ENCODE measurements at regions of chr6 and their contacts with region 1.

Region 1: DNA sequence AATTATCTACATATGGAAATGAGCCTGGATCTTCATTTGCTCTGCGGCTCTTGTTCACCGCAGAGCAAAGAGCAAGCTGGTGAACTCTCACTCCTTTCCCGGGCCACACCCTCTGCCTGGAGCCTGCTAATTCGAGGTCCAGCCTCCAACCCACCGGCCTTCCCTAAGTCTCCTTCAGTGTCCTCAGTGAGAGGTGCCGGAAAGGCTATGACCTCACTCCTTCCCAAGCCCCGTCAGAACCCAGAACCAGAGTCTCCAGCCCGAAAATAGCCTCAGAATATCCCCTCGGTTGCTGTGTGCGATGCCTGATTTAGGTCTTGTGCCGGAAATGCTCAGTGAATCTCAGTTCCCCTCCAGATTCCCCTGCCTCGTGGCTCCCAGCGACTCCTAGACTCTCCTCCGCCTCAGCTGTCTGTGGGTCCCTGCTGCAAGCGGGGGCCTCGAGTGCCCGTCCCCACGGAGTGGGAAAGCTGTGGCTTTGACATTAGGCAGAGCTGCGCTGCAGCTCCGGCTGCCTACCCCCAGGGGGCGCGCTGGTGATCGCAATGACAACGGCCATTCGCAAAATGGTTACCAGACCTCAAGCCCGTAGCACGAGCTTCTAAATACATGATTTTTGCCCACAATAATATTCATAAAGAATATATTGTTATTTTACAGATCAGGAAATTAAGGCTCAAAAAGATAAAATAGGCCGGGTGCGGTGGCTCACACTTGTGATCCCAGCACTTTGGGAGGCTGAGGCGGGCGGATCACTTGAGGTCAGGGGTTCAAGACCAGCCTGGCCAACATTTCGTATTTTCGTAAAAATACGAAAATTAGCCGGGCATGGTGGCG is 4.1 kb upstream of the BNIP5 start:
- DNase-seq: peak; percentile 74
- H3K4me3 ChIP-seq: no peak overlapping the region
- H3K27ac ChIP-seq: no peak overlapping the region
- H3K4me1 ChIP-seq: no peaks in the 10 kb centered on the region
- H3K27me3 ChIP-seq: no peaks in the 10 kb centered on the region
- CTCF ChIP-seq: peak; percentile 98

Region 2: GRCh38 chr6:35327349-35328027 is 1013.3 kb before region 1 on chr6:
- CTCF ChIA-PET with region 1: no interaction called
- POLR2A ChIA-PET with region 1: no interaction called
- intact Hi-C with region 1: no loop called
- DNase-seq: peak; percentile 68
- H3K4me3 ChIP-seq: no peak overlapping the region
- H3K27ac ChIP-seq: no peak overlapping the region
- H3K4me1 ChIP-seq: no peaks in the 10 kb centered on the region
- H3K27me3 ChIP-seq: no peaks in the 10 kb centered on the region
- CTCF ChIP-seq: peak; percentile 65

Region 3: GRCh38 chr6:35562053-35562452 is 778.8 kb before region 1 on chr6:
- CTCF ChIA-PET with region 1: interaction called, 11 read pairs
- POLR2A ChIA-PET with region 1: no interaction called
- intact Hi-C with region 1: no loop called
- DNase-seq: peak; percentile 33
- H3K4me3 ChIP-seq: no peak overlapping the region
- H3K27ac ChIP-seq: no peak overlapping the region
- H3K4me1 ChIP-seq: no peaks in the 10 kb centered on the region
- H3K27me3 ChIP-seq: peaks cover 6% of the 10 kb centered on the region
- CTCF ChIP-seq: no peak

Region 4: GRCh38 chr6:36360241-36361054 is 19.6 kb after region 1 on chr6:
- CTCF ChIA-PET with region 1: interaction called, 14 read pairs
- POLR2A ChIA-PET with region 1: no interaction called
- intact Hi-C with region 1: loop called (anchors 2 kb)
- DNase-seq: peak; percentile 87
- H3K4me3 ChIP-seq: no peak overlapping the region
- H3K27ac ChIP-seq: no peak overlapping the region
- H3K4me1 ChIP-seq: no peaks in the 10 kb centered on the region
- H3K27me3 ChIP-seq: no peaks in the 10 kb centered on the region
- CTCF ChIP-seq: peak; percentile 85

Region 5: GRCh38 chr6:36594816-36595643 is 254.2 kb after region 1 on chr6:
- CTCF ChIA-PET with region 1: no interaction called
- POLR2A ChIA-PET with region 1: interaction called, 11 read pairs
- intact Hi-C with region 1: no loop called
- DNase-seq: peak; percentile 64
- H3K4me3 ChIP-seq: peak overlapping the region; percentile 73
- H3K27ac ChIP-seq: peak overlapping the region; percentile 99
- H3K4me1 ChIP-seq: peaks cover 28% of the 10 kb centered on the region
- H3K27me3 ChIP-seq: no peaks in the 10 kb centered on the region
- CTCF ChIP-seq: no peak